Activated CD8-positive, alpha-beta T cell treated with anti-CD3 and anti-CD28 coated beads, Interleukin-2, amount 10 ng/mL, durations not matched to agents 7 days and 5 days (primary cell): ENCODE measurements at regions of chr3 and their contacts with region 1.

Region 1: GRCh38 chr3:64023187-64023848 is at the start of gene PSMD6:
- DNase-seq: peak; percentile 92
- ATAC-seq: peak; percentile 94
- H3K4me3 Mint-ChIP-seq: peak within 1 kb of the TSS; percentile 74
- H3K27ac Mint-ChIP-seq: peak within 1 kb of the TSS; percentile 93
- H3K4me1 Mint-ChIP-seq: peaks cover 30% of the 10 kb centered on the region
- H3K27me3 Mint-ChIP-seq: peaks cover 14% of the 10 kb centered on the region
- total RNA-seq, gene PSMD6: 81.2 to 86.3 TPM

Region 2: GRCh38 chr3:63911873-63912767 is 111.2 kb before region 1 on chr3 and contains the start of gene SCAANT1:
- CTCF ChIA-PET with region 1: interaction called, 15 read pairs
- POLR2A ChIA-PET with region 1: no interaction called
- DNase-seq: peak; percentile 84
- ATAC-seq: peak; percentile 80
- H3K4me3 Mint-ChIP-seq: peak within 1 kb of the TSS; percentile 88
- H3K27ac Mint-ChIP-seq: peak within 1 kb of the TSS; percentile 94
- H3K4me1 Mint-ChIP-seq: peaks cover 47% of the 10 kb centered on the region
- H3K27me3 Mint-ChIP-seq: no peaks in the 10 kb centered on the region
- total RNA-seq, gene SCAANT1: not detected

Region 3: GRCh38 chr3:63967675-63968611 is 55.4 kb before region 1 on chr3:
- CTCF ChIA-PET with region 1: interaction called, 15 read pairs
- POLR2A ChIA-PET with region 1: interaction called, 12 read pairs
- DNase-seq: peak; percentile 51
- ATAC-seq: peak; percentile 74
- H3K4me3 Mint-ChIP-seq: peak overlapping the region; percentile 79
- H3K27ac Mint-ChIP-seq: peak overlapping the region; percentile 96
- H3K4me1 Mint-ChIP-seq: peaks cover 85% of the 10 kb centered on the region
- H3K27me3 Mint-ChIP-seq: no peaks in the 10 kb centered on the region

Region 4: GRCh38 chr3:63975723-63976122 is 47.6 kb before region 1 on chr3:
- CTCF ChIA-PET with region 1: interaction called, 13 read pairs
- POLR2A ChIA-PET with region 1: interaction called, 7 read pairs
- DNase-seq: no peak
- ATAC-seq: no peak
- H3K4me3 Mint-ChIP-seq: no peak overlapping the region
- H3K27ac Mint-ChIP-seq: peak overlapping the region; percentile 4
- H3K4me1 Mint-ChIP-seq: peaks cover 84% of the 10 kb centered on the region
- H3K27me3 Mint-ChIP-seq: no peaks in the 10 kb centered on the region

Region 5: GRCh38 chr3:64011685-64012084 is 11.6 kb before region 1 on chr3:
- CTCF ChIA-PET with region 1: interaction called, 48 read pairs
- POLR2A ChIA-PET with region 1: interaction called, 8 read pairs
- DNase-seq: no peak
- ATAC-seq: no peak
- H3K4me3 Mint-ChIP-seq: no peak overlapping the region
- H3K27ac Mint-ChIP-seq: no peak overlapping the region
- H3K4me1 Mint-ChIP-seq: peaks cover 7% of the 10 kb centered on the region
- H3K27me3 Mint-ChIP-seq: no peaks in the 10 kb centered on the region

Region 6: GRCh38 chr3:64484289-64484992 is 461.1 kb after region 1 on chr3:
- CTCF ChIA-PET with region 1: interaction called, 33 read pairs
- POLR2A ChIA-PET with region 1: no interaction called
- DNase-seq: peak; percentile 78
- ATAC-seq: peak; percentile 86
- H3K4me3 Mint-ChIP-seq: no peak overlapping the region
- H3K27ac Mint-ChIP-seq: no peak overlapping the region
- H3K4me1 Mint-ChIP-seq: peaks cover 5% of the 10 kb centered on the region
- H3K27me3 Mint-ChIP-seq: peaks cover 6% of the 10 kb centered on the region